CD4-positive, alpha-beta T cell (primary cell): ENCODE measurements at regions of chr5 and their contacts with region 1.

Region 1: GRCh38 chr5:55994574-55995333 is at the start of gene IL6ST:
- DNase-seq: peak; percentile 90 to 99 (median 96)
- ATAC-seq: peak; percentile 86
- H3K4me3 ChIP-seq: peak within 1 kb of the TSS; percentile 95
- H3K4me3 Mint-ChIP-seq: peak within 1 kb of the TSS; percentile 97
- H3K27ac ChIP-seq: peak within 1 kb of the TSS; percentile 91 to 99
- H3K27ac Mint-ChIP-seq: peak within 1 kb of the TSS; percentile 94
- H3K4me1 ChIP-seq: peaks cover 13% of the 10 kb centered on the region
- H3K4me1 Mint-ChIP-seq: peaks cover 60% of the 10 kb centered on the region
- H3K27me3 ChIP-seq: no peaks in the 10 kb centered on the region
- H3K27me3 Mint-ChIP-seq: no peaks in the 10 kb centered on the region
- CTCF ChIP-seq: no peak
- total RNA-seq, gene IL6ST: 377 to 404 TPM

Region 2: GRCh38 chr5:56050551-56051255 is 55.9 kb after region 1 on chr5:
- CTCF ChIA-PET with region 1: no interaction called
- POLR2A ChIA-PET with region 1: interaction called, 87 read pairs
- intact Hi-C with region 1: no loop called
- DNase-seq: peak in 3 of 14 experiments; percentile 37 to 56 (median 44)
- ATAC-seq: peak; percentile 73
- H3K4me3 ChIP-seq: peak overlapping the region; percentile 4
- H3K4me3 Mint-ChIP-seq: peak overlapping the region; percentile 77
- H3K27ac ChIP-seq: peak overlapping the region; percentile 40 to 54
- H3K27ac Mint-ChIP-seq: peak overlapping the region; percentile 84
- H3K4me1 ChIP-seq: peaks cover 59% of the 10 kb centered on the region
- H3K4me1 Mint-ChIP-seq: peaks cover 74% of the 10 kb centered on the region
- H3K27me3 ChIP-seq: no peaks in the 10 kb centered on the region
- H3K27me3 Mint-ChIP-seq: no peaks in the 10 kb centered on the region
- CTCF ChIP-seq: no peak

Region 3: DNA sequence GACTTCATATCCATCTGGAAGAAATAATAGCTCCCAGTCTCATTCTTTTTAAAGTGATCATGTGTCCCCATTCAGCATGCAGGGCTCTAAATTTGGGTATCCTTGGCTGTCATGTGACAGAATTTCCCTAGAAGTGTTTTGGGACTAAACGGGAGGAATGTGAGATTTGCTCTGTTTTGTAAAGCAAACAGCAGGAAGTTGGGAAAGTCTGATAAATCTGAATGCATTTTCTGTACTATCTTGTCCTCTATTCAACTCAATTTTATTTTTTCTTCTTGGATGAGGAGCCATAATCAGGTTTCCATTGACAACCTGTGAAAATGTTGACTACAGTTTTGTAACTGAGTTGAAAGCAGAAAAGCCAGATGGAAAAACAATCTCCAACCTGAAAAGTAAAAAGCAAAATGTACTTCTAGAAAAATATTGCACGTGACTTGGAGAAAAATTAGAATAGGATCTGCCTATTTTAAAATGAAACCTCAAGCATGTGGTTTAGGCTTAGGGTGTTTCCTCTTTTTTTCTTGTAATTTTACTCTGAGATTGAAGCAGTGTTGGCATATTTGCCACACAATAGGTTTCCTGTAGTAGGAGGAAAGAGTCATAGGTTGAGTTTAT is 76.2 kb after region 1 on chr5:
- CTCF ChIA-PET with region 1: interaction called, 3 read pairs
- POLR2A ChIA-PET with region 1: interaction called, 24 read pairs
- intact Hi-C with region 1: loop called in 1 of 2 experiments (anchors 5 kb)
- DNase-seq: peak in 3 of 14 experiments; percentile 54 to 71 (median 58)
- ATAC-seq: peak; percentile 86
- H3K4me3 ChIP-seq: peak overlapping the region; percentile 3
- H3K4me3 Mint-ChIP-seq: peak overlapping the region; percentile 59
- H3K27ac ChIP-seq: peak overlapping the region; percentile 64 to 84
- H3K27ac Mint-ChIP-seq: peak overlapping the region; percentile 96
- H3K4me1 ChIP-seq: peaks cover 58% of the 10 kb centered on the region
- H3K4me1 Mint-ChIP-seq: peaks cover 84% of the 10 kb centered on the region
- H3K27me3 ChIP-seq: no peaks in the 10 kb centered on the region
- H3K27me3 Mint-ChIP-seq: no peaks in the 10 kb centered on the region
- CTCF ChIP-seq: no peak

Region 4: DNA sequence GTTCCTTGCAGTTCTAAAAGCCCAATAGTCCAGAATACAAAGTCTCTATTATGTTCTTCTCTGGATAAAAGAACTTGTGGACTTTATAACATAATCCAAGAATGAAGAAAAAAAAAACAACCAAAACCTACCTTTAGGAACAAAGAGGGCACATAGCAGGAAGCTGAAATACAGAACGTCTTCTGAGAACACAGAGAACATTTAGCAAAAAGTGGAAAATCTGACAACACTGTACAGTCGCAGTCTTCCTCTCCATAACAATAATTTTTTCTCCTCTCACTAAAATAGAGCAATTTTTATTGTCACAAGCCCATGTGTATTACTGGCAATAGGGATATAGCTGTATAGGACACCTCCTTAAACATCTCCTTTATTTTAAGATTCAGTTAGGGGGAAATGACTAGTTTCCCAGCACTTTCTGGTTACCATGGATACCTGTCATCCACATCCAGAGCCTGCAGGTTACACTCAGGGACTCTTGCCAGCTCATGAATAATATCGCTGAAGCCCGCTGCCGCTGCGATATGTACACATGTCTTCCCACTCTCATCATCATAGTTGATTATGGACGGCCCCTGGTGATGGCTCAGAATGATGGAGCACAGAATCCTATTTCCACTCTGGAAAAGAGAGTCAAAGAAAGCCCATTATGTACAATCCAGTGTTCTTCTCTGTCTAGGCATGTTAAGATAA is 131.9 kb after region 1 on chr5:
- CTCF ChIA-PET with region 1: no interaction called
- POLR2A ChIA-PET with region 1: interaction called, 15 read pairs
- intact Hi-C with region 1: no loop called
- DNase-seq: peak in 4 of 14 experiments; percentile 10 to 29 (median 24)
- ATAC-seq: peak; percentile 54
- H3K4me3 ChIP-seq: no peak overlapping the region
- H3K4me3 Mint-ChIP-seq: peak overlapping the region; percentile 70
- H3K27ac ChIP-seq: peak overlapping the region; percentile 23 to 64
- H3K27ac Mint-ChIP-seq: peak overlapping the region; percentile 91
- H3K4me1 ChIP-seq: peaks cover 34% of the 10 kb centered on the region
- H3K4me1 Mint-ChIP-seq: peaks cover 70% of the 10 kb centered on the region
- H3K27me3 ChIP-seq: no peaks in the 10 kb centered on the region
- H3K27me3 Mint-ChIP-seq: no peaks in the 10 kb centered on the region
- CTCF ChIP-seq: no peak

Region 5: DNA sequence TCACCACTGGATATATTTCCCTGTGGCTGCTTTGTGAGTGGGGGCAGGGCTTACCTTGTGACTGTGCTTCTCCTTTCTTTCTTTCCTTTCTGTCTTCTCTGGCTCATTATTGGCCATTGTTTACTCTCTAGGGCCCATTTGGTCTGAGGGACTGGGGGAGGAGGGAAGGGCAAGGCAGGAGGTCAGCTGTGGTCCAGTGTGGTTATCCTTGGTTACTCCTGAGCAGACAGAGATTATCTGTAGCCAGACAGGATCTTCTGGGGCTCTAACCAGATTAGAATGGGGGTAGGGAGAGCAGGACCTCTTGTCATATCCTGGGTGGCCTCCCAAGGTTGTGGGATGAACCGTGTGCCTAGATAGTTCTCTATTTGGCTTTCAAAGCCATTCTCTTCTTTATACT is 167.2 kb after region 1 on chr5:
- CTCF ChIA-PET with region 1: no interaction called
- POLR2A ChIA-PET with region 1: interaction called, 7 read pairs
- intact Hi-C with region 1: loop called in 1 of 2 experiments (anchors 2 kb)
- DNase-seq: no peak
- ATAC-seq: no peak
- H3K4me3 ChIP-seq: no peak overlapping the region
- H3K4me3 Mint-ChIP-seq: peak overlapping the region; percentile 78
- H3K27ac ChIP-seq: no peak overlapping the region
- H3K27ac Mint-ChIP-seq: peak overlapping the region; percentile 100
- H3K4me1 ChIP-seq: peaks cover 36% of the 10 kb centered on the region
- H3K4me1 Mint-ChIP-seq: peaks cover 86% of the 10 kb centered on the region
- H3K27me3 ChIP-seq: no peaks in the 10 kb centered on the region
- H3K27me3 Mint-ChIP-seq: no peaks in the 10 kb centered on the region
- CTCF ChIP-seq: no peak

Region 6: DNA sequence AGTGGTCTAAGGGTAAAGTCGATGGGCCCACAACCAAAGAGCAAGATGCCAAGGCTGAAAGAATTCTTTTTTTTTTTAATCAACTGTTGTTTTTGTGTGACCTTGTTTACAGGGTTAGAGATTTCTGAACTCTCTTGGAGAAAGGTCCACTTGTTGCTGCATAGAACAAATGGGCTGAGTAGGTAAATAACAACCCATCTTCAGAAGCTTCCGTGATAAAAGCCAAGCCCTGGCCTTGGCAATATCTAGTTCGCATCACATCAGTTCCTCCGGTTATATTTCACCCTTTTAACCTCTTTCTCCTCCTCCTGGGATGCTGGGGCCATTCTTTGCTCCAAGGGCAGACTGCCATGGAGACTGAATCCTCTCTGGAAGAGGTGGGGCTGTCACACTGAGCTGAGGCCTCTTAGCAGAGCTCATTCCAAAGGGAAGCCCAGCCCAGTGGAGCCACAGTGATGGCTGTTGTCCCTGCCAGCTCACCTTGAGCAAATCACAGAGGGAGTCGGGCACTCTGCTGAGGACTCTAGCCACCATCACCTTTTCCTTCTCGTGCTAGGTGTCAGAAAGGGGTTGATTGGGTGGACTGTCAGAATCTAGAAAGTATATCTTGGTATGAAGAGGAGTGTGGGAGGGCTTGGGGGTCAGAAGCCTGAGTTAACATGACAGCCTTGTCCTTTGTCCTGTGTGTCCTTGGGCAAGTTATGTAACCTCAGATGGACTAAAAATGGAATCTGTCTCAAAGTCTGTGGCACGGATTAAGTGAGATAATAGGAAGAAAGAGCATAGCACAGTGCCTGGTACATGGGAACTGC is 220.5 kb after region 1 on chr5:
- CTCF ChIA-PET with region 1: no interaction called
- POLR2A ChIA-PET with region 1: no interaction called
- intact Hi-C with region 1: no loop called
- DNase-seq: no peak
- ATAC-seq: no peak
- H3K4me3 ChIP-seq: no peak overlapping the region
- H3K4me3 Mint-ChIP-seq: no peak overlapping the region
- H3K27ac ChIP-seq: no peak overlapping the region
- H3K27ac Mint-ChIP-seq: no peak overlapping the region
- H3K4me1 ChIP-seq: no peaks in the 10 kb centered on the region
- H3K4me1 Mint-ChIP-seq: no peaks in the 10 kb centered on the region
- H3K27me3 ChIP-seq: no peaks in the 10 kb centered on the region
- H3K27me3 Mint-ChIP-seq: no peaks in the 10 kb centered on the region
- CTCF ChIP-seq: no peak

Region 7: DNA sequence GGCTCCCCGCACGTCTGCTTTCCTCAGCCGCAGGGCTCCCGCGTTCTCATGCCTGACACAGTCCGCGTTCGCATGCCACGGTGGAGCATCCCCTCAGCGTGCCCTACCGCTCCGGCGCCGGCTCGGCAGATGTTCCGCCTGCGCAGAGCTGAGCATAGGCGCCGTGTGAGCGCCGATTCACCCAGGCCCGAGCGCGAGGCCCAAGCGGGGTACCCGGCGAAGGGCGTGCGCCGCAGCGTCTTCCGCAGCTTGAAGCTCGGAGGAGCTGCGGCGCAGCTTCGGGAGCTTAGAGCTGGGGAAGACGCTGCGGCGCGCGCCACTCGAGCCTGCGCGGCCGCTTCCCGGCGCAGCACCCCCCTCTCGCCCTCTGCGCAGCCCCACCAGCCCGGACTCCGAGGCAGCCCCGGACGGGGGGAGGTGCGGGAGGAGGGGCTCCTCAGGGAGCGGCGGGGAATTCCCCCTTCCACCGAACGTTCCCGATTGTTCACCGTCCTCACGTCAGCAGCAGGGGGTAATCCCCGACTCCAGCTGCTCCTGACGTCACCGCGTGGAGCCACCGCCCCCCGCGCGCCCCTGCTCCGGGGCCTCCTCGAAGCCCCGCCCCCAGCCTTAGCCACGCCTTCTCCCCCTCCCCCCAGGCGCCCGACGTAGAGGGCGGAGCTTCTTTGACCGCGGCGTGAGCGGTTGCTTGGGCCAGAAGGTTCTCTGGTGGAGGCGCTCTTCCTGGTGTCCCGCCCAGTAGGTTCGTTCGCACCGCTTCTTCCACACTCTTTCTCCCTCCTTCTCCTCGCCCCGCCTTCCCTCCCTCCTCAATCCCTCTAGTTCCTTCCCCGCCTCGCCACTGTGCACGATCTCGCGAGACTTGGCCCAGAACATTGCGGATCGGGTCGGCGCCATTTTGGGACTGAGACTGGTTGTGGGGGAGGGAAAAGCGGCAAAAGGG is 1178.7 kb after region 1 on chr5 and contains the start of gene GPBP1:
- CTCF ChIA-PET with region 1: no interaction called
- POLR2A ChIA-PET with region 1: interaction called, 6 read pairs
- intact Hi-C with region 1: loop called (anchors 10 kb)
- DNase-seq: peak; percentile 94 to 100 (median 97)
- ATAC-seq: peak; percentile 70
- H3K4me3 ChIP-seq: peak within 1 kb of the TSS; percentile 91
- H3K4me3 Mint-ChIP-seq: peak within 1 kb of the TSS; percentile 98
- H3K27ac ChIP-seq: peak within 1 kb of the TSS; percentile 100
- H3K27ac Mint-ChIP-seq: peak within 1 kb of the TSS; percentile 96
- H3K4me1 ChIP-seq: peaks cover 19% of the 10 kb centered on the region
- H3K4me1 Mint-ChIP-seq: peaks cover 41% of the 10 kb centered on the region
- H3K27me3 ChIP-seq: no peaks in the 10 kb centered on the region
- H3K27me3 Mint-ChIP-seq: no peaks in the 10 kb centered on the region
- CTCF ChIP-seq: no peak
- total RNA-seq, gene GPBP1: 136 to 137 TPM